Head of caudate nucleus (tissue), 42 donors: ENCODE measurements at regions of chr3 and their contacts with region 1.

Region 1: DNA sequence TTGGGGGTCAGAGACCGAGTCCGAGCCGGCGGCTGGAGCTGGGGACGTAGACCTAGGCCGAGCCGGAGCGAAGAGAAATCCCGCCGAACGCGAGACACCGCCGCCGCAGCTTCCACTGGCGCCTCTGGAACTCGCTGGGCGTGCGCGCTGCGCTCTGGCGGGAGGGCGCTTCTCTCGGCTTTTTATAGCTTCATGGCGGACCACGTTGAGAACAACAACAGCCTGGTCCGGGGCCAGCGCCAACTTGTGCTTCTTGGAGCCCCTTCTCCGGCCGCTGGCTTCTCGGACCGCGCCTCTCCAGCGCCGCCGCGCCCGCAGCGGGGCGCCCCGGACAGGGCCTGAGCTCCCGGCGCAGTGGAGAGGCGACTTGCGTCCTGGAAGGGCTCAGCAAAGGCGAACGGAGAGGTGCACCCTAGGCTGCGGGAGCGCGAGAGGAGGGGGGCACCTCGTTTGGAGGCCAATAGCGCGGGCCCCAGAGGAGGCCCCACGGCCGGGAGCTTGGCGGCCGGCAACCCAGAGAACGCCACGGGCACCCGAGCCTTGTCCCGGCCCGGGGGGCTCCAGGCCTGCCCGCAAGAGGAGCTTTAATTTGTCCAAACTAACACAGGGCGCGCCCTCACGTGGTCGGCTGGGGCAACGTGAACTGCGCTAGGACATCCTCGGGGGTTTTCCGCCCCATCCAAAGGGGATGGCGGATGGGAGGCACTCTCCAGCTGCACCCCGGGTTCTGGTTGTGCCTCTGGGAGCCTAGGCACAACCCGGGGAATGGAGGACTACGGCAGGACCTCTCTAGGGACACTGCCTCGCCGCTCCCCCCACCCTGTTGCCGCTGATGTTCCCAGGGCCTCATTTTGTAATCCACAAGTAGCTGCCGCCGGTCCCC is 37.7 kb downstream of the HMCES start:
- DNase-seq: peak; percentile 83 to 97 (median 92)

Region 2: DNA sequence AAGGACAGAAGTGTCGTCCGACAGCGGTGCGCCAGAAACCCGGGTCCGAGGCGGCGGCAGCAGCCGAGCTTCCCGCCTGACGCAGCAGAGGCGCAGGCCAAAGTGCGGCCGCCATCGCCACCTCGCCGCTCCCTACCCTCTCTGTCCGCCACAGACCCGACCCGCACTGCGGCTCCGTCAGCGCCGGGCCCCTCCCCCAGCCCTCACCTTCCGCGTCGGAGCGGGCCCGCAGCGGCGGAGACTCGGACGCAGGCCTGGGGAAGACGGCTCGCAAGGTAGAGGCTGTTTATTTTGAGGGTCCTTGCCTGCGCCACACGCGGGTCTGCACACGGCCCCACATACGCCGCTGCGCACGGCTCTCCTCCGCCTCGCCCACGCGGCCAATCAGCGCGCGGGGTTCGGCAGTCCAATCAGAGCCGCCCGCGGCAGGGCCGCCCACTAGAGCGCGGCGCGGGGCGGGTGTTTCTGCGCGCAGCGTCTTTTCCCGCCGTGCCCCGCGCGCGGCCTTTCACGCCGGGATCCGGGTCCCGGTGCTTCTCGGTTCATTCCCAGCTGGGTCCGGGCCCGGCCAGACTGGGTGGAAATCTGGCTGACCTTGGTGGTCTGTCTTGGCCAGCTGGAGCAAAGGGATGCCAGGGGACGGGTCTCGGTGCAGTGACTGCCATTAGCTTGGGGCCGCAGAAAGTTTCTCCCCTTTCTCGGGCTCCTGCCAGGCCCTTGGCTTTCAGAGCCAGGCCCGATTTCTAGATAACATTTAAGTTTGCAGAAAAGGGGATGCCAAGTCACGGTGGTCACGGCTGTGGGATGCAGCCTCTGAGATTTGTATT is 132.6 kb before region 1 on chr3 and contains the start of gene CNBP:
- intact Hi-C with region 1: loop called (anchors 5 kb)
- DNase-seq: peak; percentile 76 to 98 (median 95)

Region 3: GRCh38 chr3:129278439-129278970 is 37.9 kb before region 1 on chr3 and contains the start of gene HMCES:
- intact Hi-C with region 1: loop called (anchors 5 kb)
- DNase-seq: peak; percentile 70 to 97 (median 94)

Region 4: GRCh38 chr3:129485721-129486673 is 169.6 kb after region 1 on chr3:
- intact Hi-C with region 1: no loop called
- DNase-seq: peak in 33 of 42 donors; percentile 26 to 87 (median 61)